G401 (cell line): ENCODE measurements at regions of chr11 and their contacts with region 1.

Region 1: DNA sequence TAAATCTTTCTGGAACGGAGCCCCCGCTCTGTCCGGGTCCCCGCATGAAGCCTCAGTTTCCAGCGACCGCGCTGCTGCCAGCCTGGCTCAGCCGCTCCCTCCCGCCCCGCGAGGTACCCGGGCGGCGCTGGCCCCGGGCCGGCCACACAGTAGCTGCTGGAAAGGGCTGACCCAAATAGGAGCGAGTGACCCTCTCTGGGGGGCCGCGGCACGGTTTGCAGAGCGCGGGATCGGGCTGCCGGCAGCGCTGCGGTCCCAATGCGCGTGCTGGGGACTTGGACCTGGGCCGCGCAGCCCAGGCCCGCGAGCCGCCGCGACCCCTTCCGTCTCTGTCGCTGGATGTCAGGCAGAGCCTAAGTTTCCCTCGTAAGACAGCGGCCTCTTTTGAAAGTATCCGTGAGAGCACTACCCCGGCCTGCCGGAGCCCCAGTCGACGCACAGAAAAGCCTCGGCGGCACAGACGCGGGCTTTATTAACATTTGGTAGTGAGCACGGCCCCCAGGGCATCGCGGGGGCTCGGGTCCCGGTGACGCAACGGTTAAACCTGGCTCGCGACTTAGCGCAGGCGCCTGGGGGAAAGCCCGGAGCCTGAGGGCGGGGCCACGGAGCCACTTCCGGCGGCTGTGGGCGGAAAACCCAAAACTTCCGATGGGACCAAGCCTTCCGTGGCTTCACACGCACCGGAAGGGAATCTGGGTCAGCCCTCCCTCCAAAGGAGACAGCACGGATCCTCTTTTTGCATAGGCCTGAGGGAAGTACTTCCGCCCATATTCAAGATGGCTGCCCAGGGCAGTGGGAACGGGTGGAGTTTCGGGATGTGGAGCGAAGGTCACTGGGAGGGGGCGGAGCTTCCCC is 14.9 kb downstream of the BAD start:
- DNase-seq: peak; percentile 100

Region 2: GRCh38 chr11:63838678-63839507 is 430.7 kb before region 1 on chr11 and contains the start of gene MARK2:
- in situ Hi-C with region 1: no loop called
- DNase-seq: peak; percentile 99
- total RNA-seq, gene MARK2: 21.0 and 22.5 TPM in 2 replicates

Region 3: GRCh38 chr11:64131683-64132190 is 137.9 kb before region 1 on chr11:
- in situ Hi-C with region 1: no loop called
- DNase-seq: no peak

Region 4: DNA sequence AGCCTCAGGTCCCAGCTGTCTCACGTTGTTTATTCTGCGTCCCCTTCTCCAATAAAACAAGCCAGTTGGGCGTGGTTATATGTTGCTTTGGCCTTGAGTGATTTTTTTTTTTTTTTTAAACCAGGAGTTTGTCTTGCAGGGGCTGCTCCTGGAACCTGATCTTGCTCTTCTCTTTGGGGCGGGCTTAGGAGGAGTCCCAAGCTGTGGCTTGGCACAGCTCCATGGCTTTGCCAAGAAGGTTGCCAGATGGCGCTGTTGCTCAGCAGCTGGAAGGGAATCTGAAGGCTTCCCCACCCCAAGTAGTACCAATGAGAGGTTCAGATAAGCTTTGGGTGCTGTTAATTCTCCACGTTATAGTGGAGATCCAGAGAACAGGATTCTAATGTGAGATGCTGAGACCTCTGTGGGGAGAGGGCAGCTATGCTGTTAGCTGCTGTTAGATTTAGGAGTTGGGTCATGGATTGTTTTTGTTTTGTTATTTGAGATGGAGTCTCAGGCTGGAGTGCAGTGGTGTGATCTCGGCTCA is 65.1 kb before region 1 on chr11:
- in situ Hi-C with region 1: loop called (anchors 10 kb)
- DNase-seq: peak; percentile 86

Region 5: DNA sequence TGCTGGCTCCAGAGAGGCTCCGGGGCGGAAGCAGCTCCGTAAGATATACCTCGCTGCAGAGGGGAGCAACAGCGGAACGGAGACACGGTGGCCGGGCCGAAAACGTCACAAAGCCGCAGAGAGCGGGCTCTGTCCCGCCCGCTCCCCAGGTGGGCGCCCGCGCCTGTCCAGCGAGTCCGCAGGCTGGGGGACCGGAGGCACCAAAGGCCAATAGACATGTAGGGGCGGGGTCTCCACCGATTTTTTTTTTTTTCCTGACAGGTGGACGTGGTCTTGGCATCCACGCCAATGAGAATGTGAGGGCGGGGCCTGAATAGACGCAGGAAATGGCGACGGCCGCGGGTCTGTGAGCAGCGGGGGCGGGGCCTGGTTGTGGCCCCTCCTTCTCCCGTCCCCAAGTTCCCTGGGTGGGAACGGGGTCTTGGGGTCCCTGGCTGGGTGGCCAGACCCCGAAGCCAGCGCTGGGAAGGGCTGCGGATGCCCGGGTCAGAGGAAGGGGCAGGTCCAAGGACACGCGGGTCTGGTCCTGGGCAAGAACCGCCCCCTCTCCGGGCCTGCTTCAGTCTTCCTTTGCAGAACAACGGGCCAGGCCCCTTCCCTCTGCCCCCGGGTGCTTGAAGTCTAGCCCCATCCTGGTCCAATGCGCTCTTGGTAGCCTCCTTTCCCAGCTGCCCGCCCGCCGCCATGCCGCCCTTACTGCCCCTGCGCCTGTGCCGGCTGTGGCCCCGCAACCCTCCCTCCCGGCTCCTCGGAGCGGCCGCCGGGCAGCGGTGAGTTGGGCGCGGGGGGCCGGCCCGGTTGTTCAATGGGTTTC is 39.2 kb before region 1 on chr11 and contains the start of gene DNAJC4:
- in situ Hi-C with region 1: no loop called
- DNase-seq: peak; percentile 98
- total RNA-seq, gene DNAJC4: 10.3 and 24.1 TPM in 2 replicates

Region 6: DNA sequence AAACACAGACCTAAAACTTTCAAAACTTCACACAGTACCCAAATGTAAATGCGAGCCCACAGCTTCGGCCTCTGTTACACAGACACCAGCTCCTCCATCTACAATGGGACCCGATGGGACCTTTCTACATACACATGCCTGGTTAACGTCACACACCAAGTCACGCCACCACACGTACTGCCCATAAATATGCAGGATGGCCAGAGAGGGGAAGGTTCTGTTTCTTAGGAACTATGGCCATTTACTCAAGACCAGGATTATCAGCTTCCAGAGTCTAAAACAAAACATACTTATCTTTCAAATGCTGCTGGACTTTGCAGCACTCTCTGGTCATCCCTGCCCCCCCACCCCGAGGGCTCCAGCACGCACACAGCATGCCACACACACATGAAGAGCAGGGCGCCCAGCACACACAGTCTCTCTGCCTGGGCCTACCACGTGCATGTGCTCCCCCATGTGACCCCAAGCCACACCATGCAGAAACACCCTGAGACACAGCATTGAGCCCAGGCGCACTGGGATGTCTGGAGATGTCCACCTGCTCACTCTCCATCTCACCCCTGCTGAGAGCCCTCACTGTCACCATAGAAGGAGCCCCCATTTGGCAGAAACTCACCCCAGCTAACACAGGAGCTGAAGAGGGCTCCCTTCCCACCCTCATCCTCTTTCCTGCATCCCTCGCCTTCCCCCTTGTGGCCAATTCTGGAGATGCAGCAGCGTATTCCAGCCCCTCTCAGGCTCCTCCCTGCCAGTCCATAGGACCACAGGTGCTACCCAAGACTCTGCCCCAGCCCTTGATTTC is 383.2 kb after region 1 on chr11:
- in situ Hi-C with region 1: no loop called
- DNase-seq: peak; percentile 90